ENCODE measurements at regions of chr3 and their contacts with region 1.

Region 1: DNA sequence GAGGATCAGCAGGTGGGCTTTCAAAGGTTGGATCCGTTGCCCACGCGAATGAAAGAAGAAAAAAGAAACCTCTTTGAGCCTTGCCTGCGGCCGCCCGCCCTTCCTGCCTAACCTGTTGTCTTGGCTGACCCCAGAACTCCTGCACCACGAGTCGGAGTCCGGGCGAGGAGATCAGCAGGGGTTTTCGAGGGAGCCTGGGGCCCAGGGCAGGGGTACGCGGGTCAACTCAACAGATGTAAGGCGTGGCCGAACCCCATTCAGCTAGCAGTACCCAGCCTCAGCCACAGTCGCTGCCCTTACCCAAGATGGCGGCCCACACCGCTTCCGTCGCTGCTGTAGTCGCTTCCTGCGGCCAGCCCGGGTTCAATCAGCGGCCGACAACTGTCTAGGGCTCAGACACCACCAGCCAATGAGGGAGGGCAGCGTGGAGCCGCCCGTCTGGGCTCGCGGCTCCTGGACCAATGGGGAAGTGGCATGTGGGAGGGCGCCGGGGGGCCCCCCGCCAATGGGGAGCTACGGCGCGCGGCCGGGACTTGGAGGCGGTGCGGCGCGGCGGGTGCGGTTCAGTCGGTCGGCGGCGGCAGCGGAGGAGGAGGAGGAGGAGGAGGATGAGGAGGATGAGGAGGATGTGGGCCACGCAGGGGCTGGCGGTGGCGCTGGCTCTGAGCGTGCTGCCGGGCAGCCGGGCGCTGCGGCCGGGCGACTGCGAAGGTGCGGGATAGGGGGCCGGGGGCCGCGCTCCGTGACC is at the start of gene MANF:
- DNase-seq: peak; percentile 97
- ATAC-seq: peak; percentile 96
- H3K4me3 ChIP-seq: peak within 1 kb of the TSS; percentile 79
- H3K27ac ChIP-seq: peak within 1 kb of the TSS; percentile 92
- H3K4me1 ChIP-seq: peaks cover 6% of the 10 kb centered on the region
- H3K27me3 ChIP-seq: no peaks in the 10 kb centered on the region
- CTCF ChIP-seq: no peak
- POLR2A ChIP-seq: peak; percentile 97
- RAD21 ChIP-seq: no peak
- total RNA-seq, gene MANF: 65.4 and 78.9 TPM in 2 replicates

Region 2: DNA sequence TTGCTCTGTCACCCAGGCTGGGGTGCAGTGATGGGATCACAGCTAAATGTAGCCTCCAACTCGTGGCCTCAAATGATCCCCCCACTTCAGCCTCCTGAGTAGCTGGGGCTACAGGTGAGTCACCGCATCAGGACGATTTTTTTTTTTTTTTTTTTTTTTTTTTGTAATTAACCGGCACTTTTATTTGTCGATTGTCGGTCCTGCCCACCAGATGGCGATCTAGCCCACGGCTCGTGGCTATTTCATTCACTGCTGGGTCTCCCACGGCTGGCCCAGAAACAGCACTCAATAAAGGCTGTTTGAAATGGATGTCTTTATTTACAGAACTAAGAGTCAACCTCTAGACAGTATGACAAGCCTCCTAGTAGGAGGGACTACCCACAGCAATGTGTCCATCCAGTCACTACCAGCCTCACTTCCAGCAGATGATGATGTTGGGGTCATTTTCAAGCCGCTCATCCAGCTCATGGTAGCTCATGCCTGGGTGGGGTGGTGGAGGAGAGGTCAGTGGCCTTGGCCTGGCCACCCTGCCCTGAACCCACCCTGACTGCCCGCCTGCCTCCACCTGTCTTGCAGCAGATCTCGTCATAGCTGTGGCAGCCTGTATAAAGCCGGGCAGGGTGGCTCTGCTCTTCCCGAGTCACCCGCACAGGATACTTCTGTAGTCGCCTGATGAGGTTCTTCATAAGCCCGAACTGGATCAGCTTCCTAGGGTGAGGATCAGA is 1037.5 kb before region 1 on chr3:
- CTCF ChIA-PET with region 1: no interaction called
- POLR2A ChIA-PET with region 1: no interaction called
- dilution Hi-C with region 1: no loop called
- in situ Hi-C with region 1: loop called (anchors 25 kb)
- intact Hi-C with region 1: loop called (anchors 5 kb)
- DNase-seq: peak; percentile 71
- ATAC-seq: 0 out of 2 replicates have a peak, but pooled peaks have one; percentile 8
- H3K4me3 ChIP-seq: no peak overlapping the region
- H3K27ac ChIP-seq: no peak overlapping the region
- H3K4me1 ChIP-seq: peaks cover 11% of the 10 kb centered on the region
- H3K27me3 ChIP-seq: no peaks in the 10 kb centered on the region
- CTCF ChIP-seq: peak; percentile 79
- POLR2A ChIP-seq: 0 out of 2 replicates have a peak, but pooled peaks have one; percentile 43
- RAD21 ChIP-seq: peak; percentile 85

Region 3: DNA sequence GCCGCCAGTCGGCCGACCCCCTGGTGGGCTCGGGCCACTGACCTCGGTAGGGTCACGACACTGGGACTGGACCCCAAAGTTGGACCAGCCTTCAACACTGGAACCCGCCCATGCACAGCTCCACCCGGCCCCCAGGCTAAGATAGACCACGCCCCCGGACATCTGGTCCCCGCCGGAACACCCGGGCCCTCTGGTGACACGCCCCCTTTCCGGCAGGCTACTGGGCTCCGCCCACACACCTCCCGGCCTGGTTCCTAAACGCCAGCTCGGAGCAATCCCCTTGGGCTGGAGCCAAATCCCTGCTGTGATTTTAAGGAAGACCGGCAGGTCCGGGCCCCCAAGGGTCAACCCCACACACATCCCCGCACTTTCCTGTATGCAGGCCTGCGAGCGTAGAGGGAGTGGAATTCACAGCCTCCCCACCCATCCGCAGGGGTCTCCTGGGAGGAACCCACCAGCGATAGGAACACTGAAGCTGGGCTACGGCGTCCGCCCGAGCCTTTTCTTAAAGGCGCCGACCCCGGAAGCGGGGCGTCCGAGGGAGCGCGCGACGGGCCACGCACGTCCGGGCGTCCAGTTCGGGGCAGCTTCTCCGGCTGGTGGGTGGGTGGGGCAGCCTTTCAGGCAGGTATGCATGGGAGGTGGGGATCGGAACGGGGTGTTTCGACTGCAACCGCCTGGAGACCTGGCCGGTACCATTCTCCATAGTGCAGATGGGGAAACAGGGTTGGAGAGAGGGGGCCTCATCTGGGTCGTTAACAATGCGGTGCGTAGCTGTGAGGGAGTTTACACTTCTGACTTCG is 815.8 kb before region 1 on chr3 and contains the start of gene HEMK1:
- CTCF ChIA-PET with region 1: no interaction called
- POLR2A ChIA-PET with region 1: no interaction called
- dilution Hi-C with region 1: no loop called
- in situ Hi-C with region 1: no loop called
- intact Hi-C with region 1: loop called (anchors 1 kb)
- DNase-seq: peak; percentile 91
- ATAC-seq: peak; percentile 81
- H3K4me3 ChIP-seq: peak within 1 kb of the TSS; percentile 78
- H3K27ac ChIP-seq: peak within 1 kb of the TSS; percentile 96
- H3K4me1 ChIP-seq: peaks cover 5% of the 10 kb centered on the region
- H3K27me3 ChIP-seq: no peaks in the 10 kb centered on the region
- CTCF ChIP-seq: no peak
- POLR2A ChIP-seq: peak; percentile 69
- RAD21 ChIP-seq: no peak
- total RNA-seq, gene HEMK1: 12.5 and 17.2 TPM in 2 replicates

Region 4: GRCh38 chr3:50971487-50971924 is 413.4 kb before region 1 on chr3:
- CTCF ChIA-PET with region 1: no interaction called
- POLR2A ChIA-PET with region 1: no interaction called
- dilution Hi-C with region 1: no loop called
- in situ Hi-C with region 1: no loop called
- intact Hi-C with region 1: loop called (anchors 5 kb)
- DNase-seq: peak; percentile 45
- ATAC-seq: peak; percentile 81
- H3K4me3 ChIP-seq: no peak overlapping the region
- H3K27ac ChIP-seq: no peak overlapping the region
- H3K4me1 ChIP-seq: no peaks in the 10 kb centered on the region
- H3K27me3 ChIP-seq: no peaks in the 10 kb centered on the region
- CTCF ChIP-seq: peak; percentile 74
- POLR2A ChIP-seq: no peak
- RAD21 ChIP-seq: peak; percentile 70

Region 5: DNA sequence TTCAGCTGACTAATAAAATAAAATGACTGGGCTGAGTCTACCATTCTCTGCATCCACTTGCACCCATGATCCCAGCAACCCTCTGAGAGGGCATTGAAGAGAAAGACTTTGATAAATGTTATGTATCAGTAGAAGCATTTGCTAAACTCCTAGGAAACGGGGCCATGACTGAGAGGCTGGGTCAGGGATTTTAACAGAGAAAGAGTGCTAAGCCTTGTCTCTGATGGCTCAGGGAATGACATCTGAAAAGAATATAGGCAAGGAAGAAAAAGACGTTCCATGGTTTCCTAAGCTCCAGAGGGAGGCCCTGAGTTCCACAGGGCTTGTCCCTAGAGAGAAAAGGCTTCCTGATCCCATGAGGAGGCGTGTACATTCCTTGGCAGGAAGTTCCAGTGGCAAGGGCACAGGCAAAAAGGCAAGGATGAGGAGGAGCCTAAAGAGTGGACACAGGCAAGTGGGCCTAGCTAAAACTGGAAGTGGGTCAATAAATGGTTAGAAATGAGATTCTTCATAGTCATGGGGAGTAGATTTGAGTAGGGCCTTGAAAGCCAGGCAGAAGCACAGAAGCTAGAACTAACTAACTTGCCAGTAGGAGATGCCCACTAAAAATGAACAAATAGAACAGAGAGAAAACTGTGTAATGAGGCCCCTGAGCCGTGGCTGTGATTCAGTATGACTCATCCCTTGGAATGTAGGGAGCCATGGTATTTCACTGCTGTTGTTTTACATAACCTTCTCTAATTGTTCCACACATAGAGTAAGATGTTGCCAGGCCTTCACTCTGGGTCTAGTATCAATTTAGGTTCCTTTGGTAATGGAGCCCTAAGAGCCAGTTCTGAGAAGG is 44.7 kb before region 1 on chr3:
- CTCF ChIA-PET with region 1: interaction called, 3 read pairs
- POLR2A ChIA-PET with region 1: no interaction called
- dilution Hi-C with region 1: no loop called
- in situ Hi-C with region 1: no loop called
- intact Hi-C with region 1: loop called (anchors 1 kb)
- DNase-seq: peak; percentile 91
- ATAC-seq: peak; percentile 82
- H3K4me3 ChIP-seq: no peak overlapping the region
- H3K27ac ChIP-seq: peak overlapping the region; percentile 92
- H3K4me1 ChIP-seq: peaks cover 24% of the 10 kb centered on the region
- H3K27me3 ChIP-seq: no peaks in the 10 kb centered on the region; the same call in 1 of the 2 replicates
- CTCF ChIP-seq: no peak
- POLR2A ChIP-seq: no peak
- RAD21 ChIP-seq: no peak

Region 6: GRCh38 chr3:51354731-51355615 is 29.9 kb before region 1 on chr3:
- CTCF ChIA-PET with region 1: no interaction called
- POLR2A ChIA-PET with region 1: no interaction called
- dilution Hi-C with region 1: no loop called
- in situ Hi-C with region 1: no loop called
- intact Hi-C with region 1: no loop called
- DNase-seq: no peak
- ATAC-seq: no peak
- H3K4me3 ChIP-seq: no peak overlapping the region
- H3K27ac ChIP-seq: no peak overlapping the region
- H3K4me1 ChIP-seq: no peaks in the 10 kb centered on the region
- H3K27me3 ChIP-seq: peaks cover 11% of the 10 kb centered on the region
- CTCF ChIP-seq: no peak
- POLR2A ChIP-seq: no peak
- RAD21 ChIP-seq: no peak

Region 7: GRCh38 chr3:51422211-51422610 is 37.3 kb after region 1 on chr3:
- CTCF ChIA-PET with region 1: no interaction called
- POLR2A ChIA-PET with region 1: no interaction called
- dilution Hi-C with region 1: no loop called
- in situ Hi-C with region 1: no loop called
- intact Hi-C with region 1: no loop called
- DNase-seq: no peak
- ATAC-seq: no peak
- H3K4me3 ChIP-seq: no peak overlapping the region
- H3K27ac ChIP-seq: no peak overlapping the region
- H3K4me1 ChIP-seq: no peaks in the 10 kb centered on the region
- H3K27me3 ChIP-seq: no peaks in the 10 kb centered on the region
- CTCF ChIP-seq: no peak
- POLR2A ChIP-seq: no peak
- RAD21 ChIP-seq: no peak

Region 8: GRCh38 chr3:51799879-51800749 is 415.2 kb after region 1 on chr3:
- CTCF ChIA-PET with region 1: no interaction called
- POLR2A ChIA-PET with region 1: no interaction called
- dilution Hi-C with region 1: no loop called
- in situ Hi-C with region 1: no loop called
- intact Hi-C with region 1: loop called (anchors 5 kb)
- DNase-seq: peak; percentile 82
- ATAC-seq: peak; percentile 85
- H3K4me3 ChIP-seq: no peak overlapping the region
- H3K27ac ChIP-seq: no peak overlapping the region
- H3K4me1 ChIP-seq: no peaks in the 10 kb centered on the region
- H3K27me3 ChIP-seq: peaks cover 9% of the 10 kb centered on the region
- CTCF ChIP-seq: peak; percentile 77
- POLR2A ChIP-seq: no peak
- RAD21 ChIP-seq: peak; percentile 63

Measured in IMR-90 (cell line).